Calu3 (cell line): ENCODE measurements at regions of chr19 and their contacts with region 1.

Region 1: DNA sequence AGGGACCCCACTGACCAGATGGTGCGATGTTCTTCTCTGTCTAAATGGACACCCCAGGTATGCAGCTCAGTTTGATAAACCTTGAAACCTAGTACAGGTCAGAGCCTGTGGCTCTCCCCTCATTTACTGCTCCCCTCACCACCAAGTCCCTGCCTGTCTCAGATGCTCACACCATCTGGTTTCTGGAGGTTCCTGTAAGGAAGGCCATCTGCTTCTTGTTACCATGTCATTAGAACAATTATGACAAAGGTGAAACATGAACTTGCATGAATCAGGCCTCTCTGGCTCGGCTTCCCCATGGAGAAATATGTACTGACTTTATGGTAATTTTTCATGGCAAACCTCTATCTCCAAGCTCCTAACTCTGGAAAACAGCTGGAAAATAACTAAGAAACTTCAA is 965.7 kb downstream of the UQCRFS1 start:
- DNase-seq: no peak
- H3K4me3 Mint-ChIP-seq: no peak overlapping the region
- H3K27ac Mint-ChIP-seq: no peak overlapping the region
- H3K4me1 Mint-ChIP-seq: no peaks in the 10 kb centered on the region
- H3K27me3 Mint-ChIP-seq: no peaks in the 10 kb centered on the region
- CTCF ChIP-seq: no peak

Region 2: GRCh38 chr19:28486926-28487325 is 239.7 kb after region 1 on chr19:
- CTCF ChIA-PET with region 1: interaction called, 10 read pairs
- intact Hi-C with region 1: no loop called
- DNase-seq: no peak
- H3K4me3 Mint-ChIP-seq: no peak overlapping the region
- H3K27ac Mint-ChIP-seq: no peak overlapping the region
- H3K4me1 Mint-ChIP-seq: no peaks in the 10 kb centered on the region
- H3K27me3 Mint-ChIP-seq: no peaks in the 10 kb centered on the region
- CTCF ChIP-seq: no peak

Region 3: GRCh38 chr19:29212648-29213573 is 965.7 kb after region 1 on chr19 and contains the start of gene UQCRFS1:
- CTCF ChIA-PET with region 1: no interaction called
- intact Hi-C with region 1: no loop called
- DNase-seq: peak; percentile 97
- H3K4me3 Mint-ChIP-seq: peak within 1 kb of the TSS; percentile 78
- H3K27ac Mint-ChIP-seq: peak within 1 kb of the TSS; percentile 70
- H3K4me1 Mint-ChIP-seq: peaks cover 28% of the 10 kb centered on the region
- H3K27me3 Mint-ChIP-seq: peaks cover 15% of the 10 kb centered on the region
- CTCF ChIP-seq: no peak
- total RNA-seq, gene UQCRFS1: 41.6 and 43.4 TPM in 2 replicates